RWPE1 (cell line): ENCODE measurements at regions of chr13 and their contacts with region 1.

Region 1: DNA sequence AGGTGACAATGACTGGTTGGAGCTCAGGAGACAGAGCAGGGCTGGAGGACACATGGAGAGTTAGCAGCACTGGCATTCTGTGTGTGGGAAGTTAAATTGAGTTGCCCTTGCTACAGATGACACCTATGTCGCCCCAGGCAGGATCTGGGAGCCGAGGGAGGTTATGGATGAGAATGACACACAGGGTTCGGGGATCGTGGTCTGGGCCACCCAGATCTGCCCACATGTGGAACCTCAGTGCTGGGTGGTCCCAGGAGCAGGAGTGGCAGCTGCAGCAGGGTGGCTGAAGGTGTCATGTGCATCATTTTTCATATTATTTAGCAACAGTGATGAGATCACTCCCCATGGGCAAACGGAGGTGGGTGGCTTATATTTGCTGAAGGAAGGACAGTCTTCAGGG is 3.1 kb downstream of the IL17D start:
- DNase-seq: no peak
- H3K27ac ChIP-seq: no peak overlapping the region
- CTCF ChIP-seq: no peak

Region 2: GRCh38 chr13:20843166-20843565 is 136.5 kb after region 1 on chr13:
- CTCF ChIA-PET with region 1: interaction called, 3 read pairs
- POLR2A ChIA-PET with region 1: interaction called, 16 read pairs
- DNase-seq: no peak
- H3K27ac ChIP-seq: no peak overlapping the region
- CTCF ChIP-seq: no peak